Posterior vena cava (tissue), 2 donors: ENCODE measurements at regions of chr20 and their contacts with region 1.

Region 1: DNA sequence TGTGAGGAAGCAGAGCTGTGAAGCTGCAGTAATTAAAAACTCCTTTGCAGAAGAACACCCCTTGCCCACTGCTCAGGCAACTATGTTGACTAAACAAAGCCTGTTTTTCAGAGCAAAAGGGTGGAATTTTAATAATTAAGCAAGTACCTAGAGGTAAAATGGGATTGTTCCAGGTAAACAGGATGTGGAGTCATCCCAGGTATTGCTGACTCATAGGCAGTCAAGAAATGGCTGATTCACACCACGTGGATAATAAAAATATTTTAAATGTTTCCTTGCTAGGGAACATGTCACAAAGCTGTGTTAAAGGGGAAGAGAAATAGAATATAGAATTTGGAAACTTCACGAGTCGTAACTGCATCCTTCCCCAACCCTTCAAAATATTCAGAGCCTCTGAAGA is 491.8 kb downstream of the BTBD3 start:
- DNase-seq: no peak

Region 2: GRCh38 chr20:11626551-11626950 is 783.0 kb before region 1 on chr20:
- intact Hi-C with region 1: loop called in 1 of 2 experiments (anchors 10 kb)
- DNase-seq: no peak